GM10248 (cell line): ENCODE measurements at regions of chr6 and their contacts with region 1.

Region 1: DNA sequence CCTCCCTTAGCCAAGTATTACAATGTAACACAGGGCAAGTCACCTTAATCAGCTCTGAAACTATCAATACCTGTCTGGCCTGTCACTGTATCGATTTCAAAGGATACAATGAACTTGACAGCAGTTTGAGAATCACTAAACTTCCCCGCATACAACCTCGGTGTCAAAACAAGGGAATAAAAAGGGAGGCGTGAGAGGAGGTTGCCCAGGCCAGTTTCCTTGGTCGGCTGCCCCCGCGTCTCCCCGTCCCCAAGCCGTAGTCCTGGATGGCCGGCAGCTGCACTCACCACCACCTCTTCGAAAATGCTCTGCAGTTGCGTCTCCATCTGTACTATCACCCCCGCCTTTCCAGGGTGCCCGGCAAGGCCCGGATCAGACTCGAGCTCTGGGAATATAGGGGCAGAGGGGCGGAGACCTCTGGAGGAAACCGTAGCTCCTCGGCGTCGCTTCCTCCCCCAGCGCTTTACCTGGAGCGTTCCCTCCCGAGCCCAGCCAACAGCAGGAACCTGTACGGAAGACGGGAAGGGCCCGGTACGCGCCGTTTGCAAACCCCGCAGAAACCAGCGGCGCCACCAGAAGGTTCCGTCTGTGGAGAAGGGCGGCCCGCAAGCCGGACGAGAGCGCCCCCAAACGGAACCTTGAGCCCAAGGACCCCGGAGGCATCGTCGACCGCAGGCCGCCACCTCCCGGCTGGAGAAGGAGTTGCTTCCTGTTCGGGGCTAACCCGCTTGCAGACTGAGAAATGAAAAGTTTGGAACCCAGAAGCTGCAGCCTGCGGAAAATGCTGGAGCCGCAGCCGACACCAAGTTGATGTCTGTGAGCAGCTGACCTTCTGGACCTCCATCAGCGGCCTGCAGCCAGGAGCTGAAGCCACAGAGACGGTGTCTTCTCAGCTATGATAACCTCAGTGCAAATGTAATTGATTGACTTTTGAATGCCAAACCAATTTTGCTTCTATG is at the start of gene MED23:
- DNase-seq: peak; percentile 88
- CTCF ChIP-seq: peak; percentile 100

Region 2: DNA sequence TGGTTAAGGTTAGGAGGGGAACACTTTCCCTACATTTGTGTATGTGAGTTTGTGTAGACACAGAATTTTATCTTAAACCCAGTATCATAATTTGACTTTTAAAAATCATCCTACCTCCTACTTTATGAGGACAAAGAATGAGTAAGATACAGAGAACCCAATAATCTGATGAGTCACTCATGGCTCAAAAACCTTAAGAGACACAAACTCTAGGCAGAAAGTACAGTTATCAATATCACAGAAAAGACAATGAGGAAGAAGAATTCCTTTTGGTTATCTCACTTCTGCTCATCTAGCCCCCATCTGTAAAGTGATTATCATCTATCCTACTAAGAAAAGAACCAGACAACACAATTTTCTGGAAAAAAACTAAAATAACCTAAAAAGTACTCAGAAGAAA is 652.7 kb before region 1 on chr6:
- CTCF ChIA-PET with region 1: no interaction called
- POLR2A ChIA-PET with region 1: no interaction called
- DNase-seq: no peak
- CTCF ChIP-seq: no peak

Region 3: GRCh38 chr6:131199568-131200272 is 428.3 kb before region 1 on chr6:
- CTCF ChIA-PET with region 1: interaction called, 18 read pairs
- POLR2A ChIA-PET with region 1: no interaction called
- DNase-seq: peak; percentile 70
- CTCF ChIP-seq: peak; percentile 77

Region 4: DNA sequence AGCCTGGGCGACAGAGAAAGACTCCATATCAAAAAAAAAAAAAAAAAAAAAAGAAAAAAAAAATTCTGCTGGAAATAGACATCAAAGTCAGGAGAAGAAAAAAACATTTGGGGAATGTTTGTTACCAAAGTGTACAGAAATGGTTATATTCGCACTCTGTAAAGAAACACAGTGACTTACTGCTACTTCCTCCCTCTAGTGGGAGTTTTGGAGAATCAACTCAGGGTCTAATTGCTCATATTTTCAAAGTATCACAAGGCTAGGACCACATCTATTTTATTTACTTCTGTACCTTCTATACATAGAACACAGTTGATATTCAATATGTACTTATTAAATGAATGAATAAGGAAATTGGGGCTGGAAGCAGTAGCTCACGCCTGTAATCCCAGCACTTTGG is 30.6 kb before region 1 on chr6:
- CTCF ChIA-PET with region 1: interaction called, 28 read pairs
- POLR2A ChIA-PET with region 1: no interaction called
- DNase-seq: no peak
- CTCF ChIP-seq: peak; percentile 10

Region 5: DNA sequence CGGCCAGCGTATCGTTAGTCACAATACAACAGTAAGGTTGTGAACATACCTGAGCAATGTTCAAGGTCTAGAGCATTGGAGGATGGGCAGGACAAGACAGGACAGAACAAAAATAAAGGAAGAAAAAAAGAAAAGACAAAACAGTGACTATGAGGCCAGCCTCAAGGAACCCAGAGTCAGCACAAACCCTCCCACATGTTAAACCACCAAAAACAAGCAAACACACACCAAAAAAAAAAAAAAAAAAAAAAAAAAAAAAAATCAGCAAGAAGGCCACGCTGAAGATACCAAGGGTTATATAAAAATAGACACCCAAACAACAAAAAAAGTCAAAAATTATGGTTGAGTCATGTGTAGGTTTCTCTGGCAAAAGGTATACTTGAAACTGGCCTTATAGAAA is 12.7 kb before region 1 on chr6:
- CTCF ChIA-PET with region 1: interaction called, 50 read pairs
- POLR2A ChIA-PET with region 1: no interaction called
- DNase-seq: no peak
- CTCF ChIP-seq: no peak

Region 6: DNA sequence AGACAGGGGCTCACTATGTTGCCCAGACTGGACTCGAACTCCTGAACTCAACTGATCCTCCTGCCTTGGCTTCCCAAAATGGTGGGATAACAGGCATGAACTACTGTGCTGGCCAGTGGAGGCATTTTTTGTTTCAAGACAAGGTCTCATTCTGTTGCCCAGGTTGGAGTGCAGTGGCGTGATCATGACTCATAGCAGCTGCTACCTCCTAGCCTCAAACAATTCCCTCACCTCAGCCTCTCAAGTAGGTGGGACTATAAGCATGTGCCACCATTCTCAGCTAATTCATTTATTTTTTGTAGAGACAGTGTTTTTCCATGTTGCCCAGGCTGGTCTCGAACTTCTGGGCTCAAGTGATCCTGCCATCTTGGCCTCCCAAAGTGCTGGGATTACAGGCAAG is 26.3 kb after region 1 on chr6:
- CTCF ChIA-PET with region 1: interaction called, 21 read pairs
- POLR2A ChIA-PET with region 1: no interaction called
- DNase-seq: no peak
- CTCF ChIP-seq: no peak

Region 7: GRCh38 chr6:131831392-131831791 is 203.4 kb after region 1 on chr6:
- CTCF ChIA-PET with region 1: no interaction called
- POLR2A ChIA-PET with region 1: no interaction called
- DNase-seq: no peak
- CTCF ChIP-seq: no peak